ENCODE measurements at regions of chr9 and their contacts with region 1.

Region 1: DNA sequence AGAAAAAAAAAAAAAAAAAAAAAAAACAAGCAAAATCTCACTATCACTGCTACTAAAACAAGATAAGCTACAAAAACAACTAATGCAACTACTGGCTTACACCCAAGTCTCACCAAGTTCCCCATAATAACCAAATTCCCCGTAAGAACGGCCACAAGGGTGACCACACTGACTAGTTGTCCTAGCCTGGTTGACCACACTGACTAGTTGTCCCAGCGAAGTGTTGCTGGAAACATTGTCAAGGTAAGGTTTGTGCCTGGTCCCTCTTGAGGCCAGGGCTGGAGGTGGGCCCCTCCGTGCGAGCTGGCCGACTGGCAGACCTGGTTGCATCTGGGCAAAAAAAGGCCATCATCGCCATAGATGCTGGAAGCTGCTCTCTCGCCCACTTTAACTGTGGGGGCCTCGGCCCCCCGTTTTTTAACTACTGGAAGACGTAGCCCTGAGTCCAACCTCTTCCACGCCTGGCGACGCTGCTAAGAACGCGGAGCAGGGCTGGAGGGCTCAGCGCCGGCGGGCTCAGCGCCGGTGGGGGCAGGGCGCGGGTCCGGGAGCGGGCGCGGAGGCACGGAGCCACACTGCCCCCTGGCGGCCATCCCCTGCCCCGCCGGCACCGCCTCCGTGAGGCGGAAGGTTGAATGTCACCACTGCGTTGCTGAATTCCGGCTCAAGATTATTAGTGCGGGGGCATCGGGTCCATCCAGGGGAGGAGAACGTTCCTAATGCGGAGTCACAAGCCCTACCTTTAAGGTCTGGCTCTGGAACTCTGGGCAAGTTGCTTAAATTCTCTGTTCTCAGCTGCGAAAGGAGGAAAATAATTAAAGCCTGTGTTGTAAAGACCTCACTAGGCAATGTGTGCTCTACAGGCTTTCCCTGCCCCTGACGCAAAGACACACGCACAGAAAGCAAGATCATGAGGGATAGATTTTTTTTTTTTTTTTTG is 84.0 kb downstream of the HSD17B3 start:
- DNase-seq: peak; percentile 61 to 86 (median 72)
- ATAC-seq: peak; percentile 81 to 93 (median 92)
- H3K4me3 ChIP-seq: peak overlapping the region in 10 of 12 donors; percentile 5 to 52 (median 38)
- H3K27ac ChIP-seq: peak overlapping the region in 8 of 12 donors; percentile 0 to 76 (median 51)
- H3K4me1 ChIP-seq: peaks cover 0 to 33% (median 15%) of the 10 kb centered on the region in 12 donors
- H3K27me3 ChIP-seq: peaks cover 0 to 38% (median 10%) of the 10 kb centered on the region in 9 donors
- CTCF ChIP-seq: peak; percentile 95 to 99 (median 97)
- POLR2A ChIP-seq: no peak

Region 2: GRCh38 chr9:95127249-95128176 is 1090.5 kb before region 1 on chr9:
- intact Hi-C with region 1: loop called in 1 of 10 experiments (anchors 5 kb)
- DNase-seq: peak; percentile 86 to 92 (median 88)
- ATAC-seq: peak; percentile 83 to 91 (median 89)
- H3K4me3 ChIP-seq: peak overlapping the region in 11 of 12 donors; percentile 8 to 58 (median 45)
- H3K27ac ChIP-seq: peak overlapping the region in 4 of 12 donors; percentile 25 to 59 (median 48)
- H3K4me1 ChIP-seq: peaks cover 0 to 24% (median 8%) of the 10 kb centered on the region in 12 donors
- H3K27me3 ChIP-seq: no peaks in the 10 kb centered on the region
- CTCF ChIP-seq: peak; percentile 92 to 99 (median 98)
- POLR2A ChIP-seq: no peak

Region 3: GRCh38 chr9:95341293-95341962 is 876.6 kb before region 1 on chr9:
- intact Hi-C with region 1: loop called in 3 of 10 experiments (anchors 5 to 10 kb)
- DNase-seq: no peak
- ATAC-seq: peak in 3 of 4 donors; percentile 55 to 63 (median 62)
- H3K4me3 ChIP-seq: no peak overlapping the region
- H3K27ac ChIP-seq: no peak overlapping the region
- H3K4me1 ChIP-seq: peaks cover 0 to 6% (median 0%) of the 10 kb centered on the region in 12 donors
- H3K27me3 ChIP-seq: peaks cover 0 to 3% (median 0%) of the 10 kb centered on the region in 9 donors
- CTCF ChIP-seq: peak in 10 of 12 donors; percentile 10 to 55 (median 30)
- POLR2A ChIP-seq: no peak

Region 4: DNA sequence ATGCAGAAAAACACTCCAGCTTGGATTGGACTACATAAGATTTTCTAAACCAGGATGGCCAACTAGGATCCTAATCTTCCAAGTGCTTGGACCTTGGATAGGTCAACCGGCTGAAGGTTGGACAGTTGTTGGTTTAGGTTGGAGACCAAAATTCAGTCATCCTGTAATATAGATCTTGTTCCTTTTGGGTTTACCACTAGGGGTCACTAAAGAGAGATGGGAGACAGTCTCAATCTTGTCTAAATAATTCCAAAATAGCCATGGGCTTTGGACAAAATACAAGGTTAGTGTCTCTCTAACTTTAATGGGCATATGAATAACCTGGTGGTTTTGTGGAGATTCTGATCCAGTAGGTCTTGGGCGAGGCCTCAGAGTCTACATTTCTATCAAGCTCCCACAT is 491.3 kb before region 1 on chr9:
- intact Hi-C with region 1: loop called in 7 of 10 experiments (anchors 2 to 10 kb)
- DNase-seq: no peak
- ATAC-seq: peak in 3 of 4 donors; percentile 45 to 59 (median 58)
- H3K4me3 ChIP-seq: no peak overlapping the region
- H3K27ac ChIP-seq: no peak overlapping the region
- H3K4me1 ChIP-seq: peaks cover 0 to 5% (median 0%) of the 10 kb centered on the region in 12 donors
- H3K27me3 ChIP-seq: no peaks in the 10 kb centered on the region
- CTCF ChIP-seq: peak; percentile 49 to 81 (median 68)
- POLR2A ChIP-seq: no peak

Region 5: GRCh38 chr9:96071076-96071814 is 146.8 kb before region 1 on chr9:
- intact Hi-C with region 1: loop called in 2 of 10 experiments (anchors 10 kb)
- DNase-seq: no peak
- ATAC-seq: no peak
- H3K4me3 ChIP-seq: no peak overlapping the region
- H3K27ac ChIP-seq: no peak overlapping the region
- H3K4me1 ChIP-seq: peaks cover 0 to 20% (median 0%) of the 10 kb centered on the region in 12 donors
- H3K27me3 ChIP-seq: no peaks in the 10 kb centered on the region
- CTCF ChIP-seq: peak in 9 of 12 donors; percentile 7 to 41 (median 36)
- POLR2A ChIP-seq: no peak

Region 6: GRCh38 chr9:96100385-96101300 is 117.4 kb before region 1 on chr9:
- intact Hi-C with region 1: no loop called
- DNase-seq: peak in 1 of 5 donors; percentile 31
- ATAC-seq: peak in 1 of 4 donors; percentile 18
- H3K4me3 ChIP-seq: no peak overlapping the region
- H3K27ac ChIP-seq: no peak overlapping the region
- H3K4me1 ChIP-seq: peaks cover 0 to 10% (median 0%) of the 10 kb centered on the region in 12 donors
- H3K27me3 ChIP-seq: peaks cover 0 to 3% (median 0%) of the 10 kb centered on the region in 9 donors
- CTCF ChIP-seq: no peak
- POLR2A ChIP-seq: no peak

Region 7: GRCh38 chr9:96461336-96461735 is 243.3 kb after region 1 on chr9:
- intact Hi-C with region 1: no loop called
- DNase-seq: no peak
- ATAC-seq: no peak
- H3K4me3 ChIP-seq: no peak overlapping the region
- H3K27ac ChIP-seq: no peak overlapping the region
- H3K4me1 ChIP-seq: peaks cover 0 to 5% (median 0%) of the 10 kb centered on the region in 12 donors
- H3K27me3 ChIP-seq: no peaks in the 10 kb centered on the region
- CTCF ChIP-seq: no peak
- POLR2A ChIP-seq: no peak

Region 8: DNA sequence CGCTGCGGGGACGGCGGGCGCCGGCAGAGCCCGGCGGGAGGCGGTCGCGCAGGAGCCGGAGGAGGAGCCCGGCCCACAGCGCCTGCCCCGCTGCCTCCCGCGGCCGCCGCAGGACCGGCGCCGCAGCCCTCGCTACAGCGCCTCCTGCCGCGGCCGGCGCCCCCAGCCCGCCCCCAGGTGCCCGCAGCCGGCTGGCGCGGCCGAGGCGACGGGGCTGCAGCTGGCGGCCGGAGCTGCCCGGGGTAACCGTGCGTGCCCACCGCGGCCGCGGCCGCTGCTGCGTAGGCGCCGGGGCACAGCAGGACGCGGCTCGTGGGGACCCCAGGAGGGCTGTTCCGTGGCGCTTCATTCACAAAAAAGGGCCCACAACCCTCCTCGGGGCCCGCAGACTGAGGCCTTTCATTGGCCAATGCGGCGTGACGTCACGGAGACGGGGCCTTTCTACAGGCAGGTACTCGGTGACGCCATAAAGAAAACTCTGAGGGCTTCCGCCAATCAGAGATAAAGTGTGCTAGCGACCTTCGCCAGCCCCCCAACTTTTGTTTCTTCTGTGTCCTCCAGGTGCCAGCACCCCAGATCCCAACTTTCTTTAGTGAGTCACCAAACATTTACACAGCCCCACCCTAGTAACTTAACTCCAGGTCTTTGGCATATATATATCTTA is 401.6 kb after region 1 on chr9 and contains the start of gene CDC14B:
- intact Hi-C with region 1: no loop called
- DNase-seq: peak; percentile 87 to 96 (median 92)
- ATAC-seq: peak; percentile 50 to 82 (median 78)
- H3K4me3 ChIP-seq: peak within 1 kb of the TSS; percentile 58 to 89 (median 78)
- H3K27ac ChIP-seq: peak within 1 kb of the TSS; percentile 72 to 92 (median 88)
- H3K4me1 ChIP-seq: peaks cover 0 to 12% (median 2%) of the 10 kb centered on the region in 12 donors
- H3K27me3 ChIP-seq: peaks cover 0 to 14% (median 0%) of the 10 kb centered on the region in 9 donors
- CTCF ChIP-seq: peak in 2 of 12 donors; percentile 21 to 28
- POLR2A ChIP-seq: peak in 1 of 2 donors; percentile 16
- total RNA-seq, gene CDC14B: 18.8 to 37.0 (median 26.9) TPM